ENCODE measurements at regions of chr3 and their contacts with region 1.

Region 1: DNA sequence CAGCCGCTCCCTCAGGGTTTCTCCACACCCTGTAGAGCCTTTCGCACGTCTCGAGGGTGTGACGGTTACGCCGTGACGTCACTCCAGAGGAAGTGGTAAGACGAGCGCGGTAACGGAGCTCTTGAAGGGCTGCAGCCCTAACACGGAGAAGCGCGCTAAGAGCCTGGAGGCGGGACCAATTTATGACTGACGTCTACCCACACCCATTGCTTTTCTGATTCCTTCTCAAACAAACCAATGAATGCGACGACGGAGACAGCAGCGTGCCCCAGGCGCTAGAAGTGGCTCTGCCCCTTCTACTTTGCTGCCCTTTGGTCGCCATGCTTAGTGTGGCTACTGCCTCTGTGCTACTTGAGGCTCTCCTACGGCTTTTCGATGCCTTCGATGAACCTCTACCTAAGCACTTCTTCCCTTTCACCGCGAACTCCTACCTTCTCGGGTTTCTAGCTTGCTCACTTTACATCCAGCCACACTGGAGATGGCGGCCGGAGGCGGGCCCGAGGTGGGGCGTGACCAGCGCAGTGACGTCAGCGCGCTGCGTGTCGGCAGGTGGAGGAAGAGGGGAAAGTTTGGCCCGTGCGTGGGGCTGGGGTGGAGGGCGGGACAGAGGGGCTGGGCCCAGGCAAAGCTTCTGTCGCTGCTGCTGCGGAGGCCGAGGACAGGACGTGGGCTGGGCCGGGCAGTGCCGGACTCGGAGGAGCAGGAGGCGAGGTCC is at the start of gene OXSR1:
- DNase-seq: peak; percentile 98
- H3K4me3 Mint-ChIP-seq: peak within 1 kb of the TSS; percentile 96
- H3K27ac Mint-ChIP-seq: peak within 1 kb of the TSS; percentile 99
- H3K4me1 Mint-ChIP-seq: peaks cover 38% of the 10 kb centered on the region
- H3K27me3 Mint-ChIP-seq: no peaks in the 10 kb centered on the region
- total RNA-seq, gene OXSR1: 47.5 to 48.5 TPM

Region 2: DNA sequence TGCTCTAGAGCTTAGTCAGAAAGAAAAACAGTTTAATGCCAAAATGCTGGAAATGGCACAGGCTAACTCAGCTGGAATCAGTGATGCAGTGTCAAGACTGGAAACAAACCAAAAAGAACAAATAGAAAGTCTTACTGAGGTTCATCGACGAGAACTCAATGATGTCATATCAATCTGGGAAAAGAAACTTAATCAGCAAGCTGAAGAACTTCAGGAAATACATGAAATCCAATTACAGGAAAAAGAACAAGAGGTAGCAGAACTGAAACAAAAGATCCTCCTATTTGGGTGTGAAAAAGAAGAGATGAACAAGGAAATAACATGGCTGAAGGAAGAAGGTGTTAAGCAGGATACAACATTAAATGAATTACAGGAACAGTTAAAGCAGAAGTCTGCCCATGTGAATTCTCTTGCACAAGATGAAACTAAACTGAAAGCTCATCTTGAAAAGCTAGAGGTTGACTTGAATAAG is 840.2 kb before region 1 on chr3:
- CTCF ChIA-PET with region 1: no interaction called
- POLR2A ChIA-PET with region 1: no interaction called
- intact Hi-C with region 1: loop called (anchors 5 kb)
- DNase-seq: no peak
- H3K4me3 Mint-ChIP-seq: no peak overlapping the region
- H3K27ac Mint-ChIP-seq: peak overlapping the region; percentile 73
- H3K4me1 Mint-ChIP-seq: peaks cover 43% of the 10 kb centered on the region
- H3K27me3 Mint-ChIP-seq: no peaks in the 10 kb centered on the region

Region 3: DNA sequence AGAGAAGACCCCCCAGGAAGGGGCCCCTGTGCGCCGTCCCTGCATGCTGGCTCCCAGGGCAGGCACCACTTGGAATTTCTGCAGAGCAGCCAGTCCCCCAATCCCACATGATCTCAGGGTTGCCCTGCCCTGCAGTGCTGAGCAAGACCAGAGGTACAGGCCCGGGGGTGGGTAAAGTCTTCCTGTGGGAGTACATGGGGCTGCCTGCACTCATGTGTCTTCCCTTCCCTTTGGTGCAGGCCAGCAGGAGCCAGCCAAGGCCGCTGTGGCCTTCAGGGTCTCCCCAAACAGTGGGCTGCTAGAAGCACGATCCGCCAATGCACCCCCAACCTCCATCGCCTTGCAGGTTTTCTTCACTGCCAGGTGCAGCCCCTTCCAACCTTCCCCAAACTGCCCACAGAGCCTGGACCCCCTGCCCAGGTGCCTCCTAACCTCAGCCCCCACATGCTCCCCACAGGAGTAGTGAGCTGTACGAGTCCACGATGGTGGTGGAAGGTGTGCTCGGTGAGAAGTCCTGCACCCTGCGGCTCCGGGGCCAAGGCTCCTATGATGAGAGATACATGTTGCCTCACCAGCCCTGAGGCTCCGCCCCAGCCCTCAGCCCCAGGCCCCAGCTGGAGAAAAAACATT is 43.2 kb before region 1 on chr3:
- CTCF ChIA-PET with region 1: no interaction called
- POLR2A ChIA-PET with region 1: no interaction called
- intact Hi-C with region 1: no loop called
- DNase-seq: no peak
- H3K4me3 Mint-ChIP-seq: no peak overlapping the region
- H3K27ac Mint-ChIP-seq: no peak overlapping the region
- H3K4me1 Mint-ChIP-seq: no peaks in the 10 kb centered on the region
- H3K27me3 Mint-ChIP-seq: no peaks in the 10 kb centered on the region

Region 4: GRCh38 chr3:38136777-38137614 is 28.1 kb before region 1 on chr3 and contains the start of gene ACAA1:
- CTCF ChIA-PET with region 1: interaction called, 15 read pairs
- POLR2A ChIA-PET with region 1: interaction called, 70 read pairs
- intact Hi-C with region 1: loop called (anchors 1 kb)
- DNase-seq: peak; percentile 99
- H3K4me3 Mint-ChIP-seq: peak within 1 kb of the TSS; percentile 80
- H3K27ac Mint-ChIP-seq: peak within 1 kb of the TSS; percentile 93
- H3K4me1 Mint-ChIP-seq: peaks cover 55% of the 10 kb centered on the region
- H3K27me3 Mint-ChIP-seq: no peaks in the 10 kb centered on the region
- total RNA-seq, gene ACAA1: 55.5 to 57.7 TPM

Region 5: DNA sequence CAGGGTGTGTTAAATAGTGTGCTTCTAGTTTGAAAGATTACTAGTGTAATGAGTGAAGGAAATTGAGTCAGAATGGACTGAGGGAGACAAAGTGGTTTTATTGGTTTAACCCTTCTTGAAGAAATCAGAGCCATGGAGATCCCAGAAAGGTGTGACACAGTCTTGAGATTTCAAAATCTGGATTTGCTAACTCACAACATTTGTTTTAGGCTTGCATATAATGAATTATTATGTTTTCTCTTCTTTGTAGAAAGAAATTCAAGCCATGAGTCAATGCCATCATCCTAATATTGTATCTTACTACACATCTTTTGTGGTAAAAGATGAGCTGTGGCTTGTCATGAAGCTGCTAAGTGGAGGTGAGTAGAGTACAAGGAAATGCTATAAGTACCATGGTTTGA is 25.4 kb after region 1 on chr3:
- CTCF ChIA-PET with region 1: interaction called, 5 read pairs
- POLR2A ChIA-PET with region 1: interaction called, 5 read pairs
- intact Hi-C with region 1: loop called (anchors 1 kb)
- DNase-seq: no peak
- H3K4me3 Mint-ChIP-seq: no peak overlapping the region
- H3K27ac Mint-ChIP-seq: no peak overlapping the region
- H3K4me1 Mint-ChIP-seq: peaks cover 11% of the 10 kb centered on the region
- H3K27me3 Mint-ChIP-seq: no peaks in the 10 kb centered on the region

Region 6: DNA sequence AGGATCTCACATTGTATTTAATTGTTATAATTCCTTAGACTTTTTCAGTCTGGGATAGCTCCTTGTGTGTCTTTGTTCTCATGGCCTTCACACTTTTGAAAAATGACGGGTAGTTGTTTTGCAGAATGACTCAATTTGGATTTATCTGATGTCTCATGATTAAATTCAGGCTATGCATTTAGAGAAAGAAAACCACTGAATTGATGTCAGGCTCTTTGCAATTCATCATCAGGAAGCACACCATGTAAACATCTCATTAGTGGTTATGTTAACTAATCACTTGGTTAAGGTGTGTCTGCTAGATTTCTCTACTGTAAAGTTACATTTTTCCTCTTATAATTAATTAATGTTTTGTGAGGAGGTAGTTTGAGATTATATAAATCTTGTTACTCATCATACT is 92.5 kb after region 1 on chr3:
- CTCF ChIA-PET with region 1: interaction called, 3 read pairs
- POLR2A ChIA-PET with region 1: interaction called, 3 read pairs
- intact Hi-C with region 1: loop called (anchors 5 kb)
- DNase-seq: no peak
- H3K4me3 Mint-ChIP-seq: no peak overlapping the region
- H3K27ac Mint-ChIP-seq: no peak overlapping the region
- H3K4me1 Mint-ChIP-seq: peaks cover 37% of the 10 kb centered on the region
- H3K27me3 Mint-ChIP-seq: no peaks in the 10 kb centered on the region

Region 7: GRCh38 chr3:38411591-38411990 is 246.5 kb after region 1 on chr3:
- CTCF ChIA-PET with region 1: no interaction called
- POLR2A ChIA-PET with region 1: no interaction called
- intact Hi-C with region 1: no loop called
- DNase-seq: no peak
- H3K4me3 Mint-ChIP-seq: no peak overlapping the region
- H3K27ac Mint-ChIP-seq: no peak overlapping the region
- H3K4me1 Mint-ChIP-seq: no peaks in the 10 kb centered on the region
- H3K27me3 Mint-ChIP-seq: no peaks in the 10 kb centered on the region

Measured in activated CD4-positive, alpha-beta memory T cell treated with anti-CD3 and anti-CD28 coated beads for 36 hours (primary cell).